Activated B cell treated with CpG ODN at 0.5 μM for 24 hours (primary cell): ENCODE measurements at regions of chr6 and their contacts with region 1.

Region 1: GRCh38 chr6:298233-299103 is 6.2 kb downstream of the DUSP22 start:
- DNase-seq: no peak
- ATAC-seq: peak; percentile 53
- H3K4me3 Mint-ChIP-seq: no peak overlapping the region
- H3K27ac Mint-ChIP-seq: no peak overlapping the region
- H3K4me1 Mint-ChIP-seq: peaks cover 5% of the 10 kb centered on the region
- H3K27me3 Mint-ChIP-seq: no peaks in the 10 kb centered on the region
- CTCF ChIP-seq: no peak

Region 2: DNA sequence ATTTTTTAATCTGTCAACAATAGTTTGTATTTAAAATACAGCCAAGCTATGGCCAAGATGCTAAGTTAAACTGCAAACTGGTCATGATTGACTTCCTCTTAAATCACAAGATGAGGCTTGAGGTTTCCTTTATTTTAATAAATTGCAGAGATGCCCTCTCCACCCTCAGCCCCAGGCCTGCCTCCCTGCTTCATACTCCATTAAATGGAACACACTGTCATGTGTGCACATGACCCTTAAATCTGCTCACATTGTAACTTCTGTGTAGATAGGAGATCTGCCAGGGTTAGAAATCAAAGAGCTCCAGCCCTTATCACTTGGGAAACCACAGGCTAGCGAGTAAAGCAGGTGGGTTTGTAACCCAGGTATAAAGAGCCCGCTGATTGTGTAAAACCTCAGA is 14.6 kb after region 1 on chr6:
- CTCF ChIA-PET with region 1: interaction called, 8 read pairs
- POLR2A ChIA-PET with region 1: interaction called, 41 read pairs
- intact Hi-C with region 1: loop called (anchors 2 kb)
- DNase-seq: peak; percentile 15
- ATAC-seq: peak; percentile 78
- H3K4me3 Mint-ChIP-seq: peak overlapping the region; percentile 53
- H3K27ac Mint-ChIP-seq: peak overlapping the region; percentile 90
- H3K4me1 Mint-ChIP-seq: peaks cover 95% of the 10 kb centered on the region
- H3K27me3 Mint-ChIP-seq: no peaks in the 10 kb centered on the region
- CTCF ChIP-seq: no peak